ENCODE measurements at regions of chr19 and their contacts with region 1.

Region 1: DNA sequence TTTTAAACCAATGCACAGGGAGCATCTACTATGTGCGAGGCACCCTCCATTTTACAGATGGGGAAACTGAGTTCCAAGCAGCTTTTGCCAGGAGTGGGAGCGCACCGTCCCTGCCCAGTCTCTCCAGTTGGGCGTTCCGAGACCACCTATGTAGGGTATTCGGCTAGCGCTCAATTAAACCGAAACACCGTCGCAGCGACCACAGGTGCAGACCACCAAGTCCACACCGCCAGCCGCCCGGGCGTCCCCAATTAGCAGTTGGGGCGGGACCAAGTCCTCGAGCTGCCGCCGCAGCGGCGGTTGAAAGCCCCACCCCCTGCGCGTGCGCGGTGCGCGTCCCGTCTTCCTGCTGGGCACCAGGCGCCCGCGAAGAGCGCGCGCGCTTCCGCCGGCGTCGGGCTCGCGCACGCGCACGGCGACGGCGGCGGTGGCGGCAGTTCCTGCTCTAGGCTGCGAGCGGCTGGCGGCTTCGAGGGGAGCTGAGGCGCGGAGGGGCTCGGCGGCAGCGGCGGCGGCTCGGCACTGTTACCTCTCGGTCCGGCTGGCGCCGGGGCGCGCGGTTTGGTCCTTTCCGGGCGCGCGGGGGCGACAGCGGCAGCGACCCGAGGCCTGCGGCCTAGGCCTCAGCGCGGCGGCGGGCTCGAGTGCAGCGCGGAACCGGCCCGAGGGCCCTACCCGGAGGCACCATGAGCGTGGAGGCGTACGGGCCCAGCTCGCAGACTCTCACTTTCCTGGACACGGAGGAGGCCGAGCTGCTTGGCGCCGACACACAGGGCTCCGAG is at the start of gene UPF1:
- DNase-seq: peak; percentile 65
- H3K4me3 ChIP-seq: peak within 1 kb of the TSS; percentile 78
- CTCF ChIP-seq: no peak

Region 2: GRCh38 chr19:18588611-18589379 is 242.9 kb before region 1 on chr19 and contains the start of gene REX1BD:
- in situ Hi-C with region 1: loop called (anchors 25 kb)
- DNase-seq: no peak
- H3K4me3 ChIP-seq: peak within 1 kb of the TSS; percentile 82
- CTCF ChIP-seq: peak; percentile 74